Heart left ventricle (tissue), 16 donors: ENCODE measurements at regions of chr1 and their contacts with region 1.

Region 1: GRCh38 chr1:39901698-39902459 is at the start of gene MYCL:
- DNase-seq: peak; percentile 53 to 83 (median 69)
- ATAC-seq: peak; percentile 65 to 88 (median 84)
- H3K4me3 ChIP-seq: peak within 1 kb of the TSS; percentile 43 to 78 (median 58)
- H3K27ac ChIP-seq: peak within 1 kb of the TSS in 3 of 12 donors; percentile 31 to 53 (median 42)
- H3K4me1 ChIP-seq: peaks cover 0 to 29% (median 9%) of the 10 kb centered on the region in 12 donors
- H3K27me3 ChIP-seq: peaks cover 0 to 73% (median 21%) of the 10 kb centered on the region in 9 donors
- CTCF ChIP-seq: peak; percentile 44 to 75 (median 71)
- POLR2A ChIP-seq: no peak
- total RNA-seq, gene MYCL: 0.27 to 3.0 (median 0.75) TPM

Region 2: DNA sequence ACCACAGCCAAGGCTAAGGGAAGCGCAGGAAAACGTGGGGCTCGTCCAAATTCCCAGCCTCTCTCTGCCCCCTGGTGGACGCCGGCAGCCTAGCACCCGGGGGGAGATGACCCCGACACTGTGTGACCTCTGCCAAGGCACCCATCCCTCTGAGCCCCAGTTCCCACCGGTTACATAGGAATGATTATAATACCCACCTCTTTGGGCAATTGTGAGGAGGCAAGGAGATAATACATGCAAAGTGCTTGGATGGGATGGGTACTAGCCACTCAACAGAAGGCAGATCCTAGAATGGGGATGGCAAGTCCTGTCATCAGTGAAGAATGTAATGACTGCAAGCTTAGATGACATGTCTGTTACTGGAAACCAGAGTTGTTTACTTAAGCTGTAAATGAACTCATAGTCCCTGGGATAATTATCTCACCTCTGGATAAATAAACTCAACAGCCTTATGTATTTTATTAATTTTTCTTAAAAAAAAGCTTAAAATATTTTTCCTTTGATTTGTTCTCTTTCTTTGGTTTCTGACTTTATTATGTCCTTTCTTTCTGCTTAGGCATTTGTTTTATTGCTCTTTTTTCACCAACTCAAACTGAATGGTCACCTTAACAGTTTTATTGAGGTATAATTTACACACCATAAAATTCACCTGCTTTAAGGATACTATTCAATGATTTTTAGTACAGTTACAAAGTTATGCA is 102.0 kb before region 1 on chr1:
- intact Hi-C with region 1: no loop called
- DNase-seq: peak; percentile 51 to 84 (median 59)
- ATAC-seq: peak; percentile 75 to 93 (median 90)
- H3K4me3 ChIP-seq: peak overlapping the region in 2 of 12 donors; percentile 15 to 40
- H3K27ac ChIP-seq: no peak overlapping the region
- H3K4me1 ChIP-seq: peaks cover 0 to 13% (median 0%) of the 10 kb centered on the region in 12 donors
- H3K27me3 ChIP-seq: no peaks in the 10 kb centered on the region
- CTCF ChIP-seq: peak; percentile 59 to 74 (median 66)
- POLR2A ChIP-seq: no peak

Region 3: GRCh38 chr1:39852214-39852791 is 49.6 kb before region 1 on chr1:
- intact Hi-C with region 1: loop called in 1 of 10 experiments (anchors 5 kb)
- DNase-seq: no peak
- ATAC-seq: no peak
- H3K4me3 ChIP-seq: no peak overlapping the region
- H3K27ac ChIP-seq: no peak overlapping the region
- H3K4me1 ChIP-seq: peaks cover 0 to 9% (median 0%) of the 10 kb centered on the region in 12 donors
- H3K27me3 ChIP-seq: no peaks in the 10 kb centered on the region
- CTCF ChIP-seq: no peak
- POLR2A ChIP-seq: no peak

Region 4: GRCh38 chr1:40161125-40161887 is 259.4 kb after region 1 on chr1 and contains the start of gene RLF:
- intact Hi-C with region 1: no loop called
- DNase-seq: peak; percentile 95 to 97 (median 96)
- ATAC-seq: peak; percentile 99 to 100 (median 100)
- H3K4me3 ChIP-seq: peak within 1 kb of the TSS; percentile 56 to 97 (median 86)
- H3K27ac ChIP-seq: peak within 1 kb of the TSS; percentile 84 to 97 (median 92)
- H3K4me1 ChIP-seq: peaks cover 13 to 44% (median 33%) of the 10 kb centered on the region in 12 donors
- H3K27me3 ChIP-seq: no peaks in the 10 kb centered on the region
- CTCF ChIP-seq: no peak
- POLR2A ChIP-seq: peak; percentile 60 to 87
- total RNA-seq, gene RLF: 9.1 to 14.5 (median 12.3) TPM